CD4-positive, alpha-beta T cell (primary cell): ENCODE measurements at regions of chr15 and their contacts with region 1.

Region 1: GRCh38 chr15:50686468-50687301 is at the start of gene TRPM7:
- DNase-seq: peak; percentile 74 to 97 (median 84)
- ATAC-seq: peak; percentile 76
- H3K4me3 ChIP-seq: peak within 1 kb of the TSS; percentile 81
- H3K4me3 Mint-ChIP-seq: peak within 1 kb of the TSS; percentile 100
- H3K27ac ChIP-seq: peak within 1 kb of the TSS; percentile 92 to 95
- H3K27ac Mint-ChIP-seq: peak within 1 kb of the TSS; percentile 98
- H3K4me1 ChIP-seq: peaks cover 39% of the 10 kb centered on the region
- H3K4me1 Mint-ChIP-seq: peaks cover 62% of the 10 kb centered on the region
- H3K27me3 ChIP-seq: no peaks in the 10 kb centered on the region
- H3K27me3 Mint-ChIP-seq: no peaks in the 10 kb centered on the region
- CTCF ChIP-seq: no peak
- total RNA-seq, gene TRPM7: 29.0 to 30.0 TPM

Region 2: DNA sequence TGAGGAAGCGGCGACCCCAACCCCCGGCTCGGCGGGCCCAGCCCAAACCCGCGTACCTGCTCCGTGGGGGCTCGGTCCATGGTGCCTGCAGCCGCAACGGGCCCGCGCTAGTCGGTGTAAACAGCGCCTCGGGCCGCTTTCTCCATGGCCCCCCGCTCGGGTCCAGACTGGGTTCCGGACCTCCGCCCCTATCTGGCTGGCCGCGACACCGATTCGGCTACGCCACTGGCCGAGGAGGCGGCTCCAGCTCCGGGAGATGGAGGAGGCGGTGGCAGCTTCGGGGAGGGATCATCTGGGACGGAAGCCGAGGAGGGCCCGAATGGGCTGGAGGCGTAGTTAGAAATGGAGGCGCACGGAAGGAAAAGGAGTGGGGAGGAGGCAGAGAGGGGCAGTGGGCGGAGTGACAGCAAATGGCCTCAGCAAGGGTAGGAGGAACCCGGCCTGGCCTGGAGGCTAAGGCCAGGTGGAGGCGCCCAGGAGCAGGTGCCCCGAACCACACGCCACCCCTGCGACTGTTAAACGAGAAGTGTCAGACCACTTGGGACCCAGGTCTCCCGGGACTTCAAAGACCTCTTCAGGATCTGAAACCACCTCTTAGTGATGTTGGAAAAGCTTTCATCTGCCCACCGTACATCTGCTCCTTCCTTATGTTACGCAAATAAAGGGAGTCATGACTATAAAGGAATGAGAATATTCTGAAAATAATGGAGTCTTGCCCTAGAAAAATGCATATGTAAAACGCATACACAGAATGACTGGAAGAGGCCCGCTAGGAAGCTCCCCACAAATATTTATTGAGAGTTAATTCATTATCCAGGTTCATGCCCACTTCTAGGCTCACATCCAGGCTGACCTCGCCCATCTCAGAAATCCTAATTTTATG is 1640.2 kb before region 1 on chr15 and contains the start of gene SECISBP2L:
- CTCF ChIA-PET with region 1: no interaction called
- POLR2A ChIA-PET with region 1: no interaction called
- intact Hi-C with region 1: loop called in 1 of 2 experiments (anchors 10 kb)
- DNase-seq: peak; percentile 79 to 95 (median 84)
- ATAC-seq: peak; percentile 95
- H3K4me3 ChIP-seq: peak within 1 kb of the TSS; percentile 66
- H3K4me3 Mint-ChIP-seq: peak within 1 kb of the TSS; percentile 98
- H3K27ac ChIP-seq: peak within 1 kb of the TSS; percentile 5 to 52
- H3K27ac Mint-ChIP-seq: peak within 1 kb of the TSS; percentile 92
- H3K4me1 ChIP-seq: peaks cover 11% of the 10 kb centered on the region
- H3K4me1 Mint-ChIP-seq: peaks cover 42% of the 10 kb centered on the region
- H3K27me3 ChIP-seq: no peaks in the 10 kb centered on the region
- H3K27me3 Mint-ChIP-seq: no peaks in the 10 kb centered on the region
- CTCF ChIP-seq: no peak
- total RNA-seq, gene SECISBP2L: 55.9 to 56.0 TPM

Region 3: DNA sequence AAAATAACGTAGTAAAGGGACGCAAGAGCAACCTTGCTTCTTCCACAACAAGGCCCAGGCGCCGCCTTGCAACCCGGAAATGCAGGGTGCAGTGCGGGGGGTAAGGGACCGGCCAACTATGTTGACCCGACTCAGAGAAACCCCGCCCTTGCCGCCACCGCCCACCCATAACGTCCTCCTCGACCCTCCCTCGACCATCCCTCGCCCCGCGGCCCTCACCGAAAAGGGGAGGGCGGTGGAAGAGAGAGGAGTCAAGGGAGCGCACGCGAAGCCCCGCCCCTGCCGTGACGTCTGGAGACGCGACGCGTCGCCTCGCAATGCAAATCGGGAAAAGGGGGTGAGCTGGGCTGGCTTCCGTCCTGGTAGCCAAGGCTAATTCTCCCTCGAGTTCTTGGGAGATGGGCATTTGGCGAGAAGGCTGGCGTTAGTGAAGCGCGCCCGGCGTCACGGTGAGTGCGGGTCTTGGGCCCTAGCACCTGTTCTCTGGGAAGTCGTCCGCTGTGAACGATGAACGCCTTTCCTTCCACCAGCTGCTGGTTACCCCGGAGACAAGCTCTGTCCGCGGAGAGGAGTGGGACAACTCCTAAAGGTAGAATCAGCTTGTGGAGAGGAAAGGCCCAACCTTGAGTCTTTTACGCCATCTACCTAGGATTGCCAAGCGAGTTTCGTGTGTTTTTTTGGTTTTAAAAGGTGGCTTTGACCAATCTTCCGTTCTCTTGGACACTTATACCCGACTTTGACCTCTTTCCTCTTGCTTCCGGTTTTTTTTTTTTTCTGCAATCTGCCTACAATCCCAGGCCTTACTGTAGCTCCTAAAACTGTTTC is 262.4 kb before region 1 on chr15 and contains the start of gene USP8:
- CTCF ChIA-PET with region 1: no interaction called
- POLR2A ChIA-PET with region 1: no interaction called
- intact Hi-C with region 1: loop called in 1 of 2 experiments (anchors 2 kb)
- DNase-seq: peak; percentile 84 to 96 (median 89)
- ATAC-seq: peak; percentile 97
- H3K4me3 ChIP-seq: peak within 1 kb of the TSS; percentile 87
- H3K4me3 Mint-ChIP-seq: peak within 1 kb of the TSS; percentile 97
- H3K27ac ChIP-seq: peak within 1 kb of the TSS; percentile 86 to 96
- H3K27ac Mint-ChIP-seq: peak within 1 kb of the TSS; percentile 93
- H3K4me1 ChIP-seq: peaks cover 34% of the 10 kb centered on the region
- H3K4me1 Mint-ChIP-seq: peaks cover 45% of the 10 kb centered on the region
- H3K27me3 ChIP-seq: no peaks in the 10 kb centered on the region
- H3K27me3 Mint-ChIP-seq: no peaks in the 10 kb centered on the region
- CTCF ChIP-seq: no peak
- total RNA-seq, gene USP8: 48.9 to 50.0 TPM

Region 4: DNA sequence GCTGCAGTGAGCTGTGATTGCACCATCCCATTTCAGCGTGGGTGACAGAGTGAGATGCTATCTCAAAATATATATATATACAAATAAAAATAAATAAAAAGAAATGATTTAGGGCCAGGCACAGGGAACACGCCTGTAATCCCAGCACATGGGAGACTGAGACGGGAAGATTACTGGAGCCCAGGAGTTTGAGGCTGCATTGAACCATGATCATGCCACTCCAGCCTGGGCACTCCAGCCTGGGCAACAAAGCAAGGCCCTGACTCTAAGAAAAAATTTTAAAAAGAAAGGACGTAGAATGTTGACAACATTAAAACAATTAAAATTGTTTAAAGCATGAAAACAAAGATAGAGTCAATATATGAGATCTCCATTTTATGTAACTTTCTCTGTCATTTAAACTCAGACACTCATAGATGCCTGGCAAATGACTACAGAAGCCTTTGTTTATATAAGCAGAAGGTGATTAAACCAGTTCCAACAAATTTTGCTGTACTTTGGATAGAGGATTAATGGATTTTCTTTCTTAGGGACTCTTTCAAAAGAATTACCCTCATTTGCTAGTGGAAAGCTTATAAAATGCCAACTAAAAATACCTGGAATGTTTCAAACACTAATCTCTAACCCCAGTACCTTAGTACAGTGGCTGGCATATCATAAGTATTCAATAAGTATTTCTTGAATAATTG is 10.6 kb after region 1 on chr15:
- CTCF ChIA-PET with region 1: no interaction called
- POLR2A ChIA-PET with region 1: no interaction called
- intact Hi-C with region 1: no loop called
- DNase-seq: no peak
- ATAC-seq: no peak
- H3K4me3 ChIP-seq: no peak overlapping the region
- H3K4me3 Mint-ChIP-seq: no peak overlapping the region
- H3K27ac ChIP-seq: no peak overlapping the region
- H3K27ac Mint-ChIP-seq: no peak overlapping the region
- H3K4me1 ChIP-seq: peaks cover 3% of the 10 kb centered on the region
- H3K4me1 Mint-ChIP-seq: no peaks in the 10 kb centered on the region
- H3K27me3 ChIP-seq: no peaks in the 10 kb centered on the region
- H3K27me3 Mint-ChIP-seq: no peaks in the 10 kb centered on the region
- CTCF ChIP-seq: no peak

Region 5: DNA sequence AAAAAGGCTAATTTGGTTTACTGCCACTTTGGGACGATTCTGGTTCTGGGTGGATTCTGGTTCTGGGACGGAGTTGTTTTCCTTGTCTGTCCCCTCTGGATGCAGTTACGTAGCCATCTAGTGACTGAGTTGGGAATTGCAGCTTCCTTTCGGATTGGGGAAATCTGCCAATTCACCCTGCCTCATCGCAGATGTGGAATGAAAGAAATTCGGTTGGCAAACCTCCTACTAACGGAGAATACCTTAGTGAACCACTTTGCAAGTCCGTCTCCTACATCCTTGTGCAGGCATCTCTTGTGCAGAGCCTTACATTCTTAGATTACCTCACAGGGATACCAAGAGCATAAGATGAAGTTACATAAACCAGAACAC is 190.3 kb after region 1 on chr15:
- CTCF ChIA-PET with region 1: interaction called, 3 read pairs
- POLR2A ChIA-PET with region 1: interaction called, 5 read pairs
- intact Hi-C with region 1: loop called in 1 of 2 experiments (anchors 2 kb)
- DNase-seq: peak; percentile 36 to 86 (median 52)
- ATAC-seq: peak; percentile 67
- H3K4me3 ChIP-seq: peak overlapping the region; percentile 26
- H3K4me3 Mint-ChIP-seq: peak overlapping the region; percentile 44
- H3K27ac ChIP-seq: no peak overlapping the region
- H3K27ac Mint-ChIP-seq: no peak overlapping the region
- H3K4me1 ChIP-seq: peaks cover 21% of the 10 kb centered on the region
- H3K4me1 Mint-ChIP-seq: peaks cover 14% of the 10 kb centered on the region
- H3K27me3 ChIP-seq: no peaks in the 10 kb centered on the region
- H3K27me3 Mint-ChIP-seq: no peaks in the 10 kb centered on the region
- CTCF ChIP-seq: peak; percentile 99